ENCODE measurements at regions of chr10 and their contacts with region 1.

Region 1: GRCh38 chr10:90592638-90593302 is 265.1 kb downstream of the HTR7 start:
- DNase-seq: peak; percentile 76
- H3K4me3 Mint-ChIP-seq: no peak overlapping the region
- H3K27ac Mint-ChIP-seq: no peak overlapping the region
- H3K4me1 Mint-ChIP-seq: no peaks in the 10 kb centered on the region
- H3K27me3 Mint-ChIP-seq: no peaks in the 10 kb centered on the region
- CTCF ChIP-seq: peak; percentile 62

Region 2: GRCh38 chr10:89426230-89426868 is 1166.4 kb before region 1 on chr10:
- CTCF ChIA-PET with region 1: no interaction called
- POLR2A ChIA-PET with region 1: no interaction called
- intact Hi-C with region 1: loop called (anchors 5 kb)
- DNase-seq: peak; percentile 70
- H3K4me3 Mint-ChIP-seq: no peak overlapping the region
- H3K27ac Mint-ChIP-seq: no peak overlapping the region
- H3K4me1 Mint-ChIP-seq: peaks cover 26% of the 10 kb centered on the region
- H3K27me3 Mint-ChIP-seq: no peaks in the 10 kb centered on the region
- CTCF ChIP-seq: peak; percentile 74

Region 3: GRCh38 chr10:89954787-89955566 is 637.8 kb before region 1 on chr10:
- CTCF ChIA-PET with region 1: interaction called, 6 read pairs
- POLR2A ChIA-PET with region 1: no interaction called
- intact Hi-C with region 1: loop called (anchors 2 kb)
- DNase-seq: peak; percentile 13
- H3K4me3 Mint-ChIP-seq: no peak overlapping the region
- H3K27ac Mint-ChIP-seq: no peak overlapping the region
- H3K4me1 Mint-ChIP-seq: no peaks in the 10 kb centered on the region
- H3K27me3 Mint-ChIP-seq: no peaks in the 10 kb centered on the region
- CTCF ChIP-seq: peak; percentile 44

Region 4: GRCh38 chr10:90007226-90007625 is 585.5 kb before region 1 on chr10:
- CTCF ChIA-PET with region 1: interaction called, 5 read pairs
- POLR2A ChIA-PET with region 1: no interaction called
- intact Hi-C with region 1: loop called (anchors 2 kb)
- DNase-seq: peak; percentile 71
- H3K4me3 Mint-ChIP-seq: no peak overlapping the region
- H3K27ac Mint-ChIP-seq: peak overlapping the region; percentile 57
- H3K4me1 Mint-ChIP-seq: peaks cover 7% of the 10 kb centered on the region
- H3K27me3 Mint-ChIP-seq: no peaks in the 10 kb centered on the region
- CTCF ChIP-seq: no peak

Region 5: GRCh38 chr10:90148116-90148855 is 444.5 kb before region 1 on chr10:
- CTCF ChIA-PET with region 1: interaction called, 10 read pairs
- POLR2A ChIA-PET with region 1: interaction called, 11 read pairs
- intact Hi-C with region 1: loop called (anchors 1 kb)
- DNase-seq: peak; percentile 60
- H3K4me3 Mint-ChIP-seq: no peak overlapping the region
- H3K27ac Mint-ChIP-seq: peak overlapping the region; percentile 44
- H3K4me1 Mint-ChIP-seq: peaks cover 14% of the 10 kb centered on the region
- H3K27me3 Mint-ChIP-seq: no peaks in the 10 kb centered on the region
- CTCF ChIP-seq: peak; percentile 57

Region 6: GRCh38 chr10:90288391-90288933 is 304.3 kb before region 1 on chr10:
- CTCF ChIA-PET with region 1: interaction called, 7 read pairs
- POLR2A ChIA-PET with region 1: no interaction called
- intact Hi-C with region 1: loop called (anchors 1 kb)
- DNase-seq: peak; percentile 42
- H3K4me3 Mint-ChIP-seq: no peak overlapping the region
- H3K27ac Mint-ChIP-seq: no peak overlapping the region
- H3K4me1 Mint-ChIP-seq: peaks cover 25% of the 10 kb centered on the region
- H3K27me3 Mint-ChIP-seq: no peaks in the 10 kb centered on the region
- CTCF ChIP-seq: peak; percentile 31

Region 7: GRCh38 chr10:90437452-90437851 is 155.3 kb before region 1 on chr10:
- CTCF ChIA-PET with region 1: interaction called, 7 read pairs
- POLR2A ChIA-PET with region 1: interaction called, 3 read pairs
- intact Hi-C with region 1: loop called (anchors 10 kb)
- DNase-seq: no peak
- H3K4me3 Mint-ChIP-seq: no peak overlapping the region
- H3K27ac Mint-ChIP-seq: peak overlapping the region; percentile 60
- H3K4me1 Mint-ChIP-seq: peaks cover 4% of the 10 kb centered on the region
- H3K27me3 Mint-ChIP-seq: no peaks in the 10 kb centered on the region
- CTCF ChIP-seq: no peak